ENCODE measurements at regions of chr4 and their contacts with region 1.

Region 1: GRCh38 chr4:121462660-121463261 is 81.9 kb upstream of the QRFPR start:
- DNase-seq: peak; percentile 54
- H3K4me3 ChIP-seq: no peak overlapping the region
- H3K27ac ChIP-seq: no peak overlapping the region
- H3K4me1 ChIP-seq: no peaks in the 10 kb centered on the region
- H3K27me3 ChIP-seq: no peaks in the 10 kb centered on the region
- CTCF ChIP-seq: peak; percentile 77 to 87

Region 2: GRCh38 chr4:121192480-121192879 is 270.3 kb before region 1 on chr4:
- CTCF ChIA-PET with region 1: no interaction called
- dilution Hi-C with region 1: no loop called
- in situ Hi-C with region 1: no loop called
- intact Hi-C with region 1: loop called (anchors 2 kb)
- DNase-seq: peak; percentile 35
- H3K4me3 ChIP-seq: peak overlapping the region in 2 of 3 experiments; percentile 2 to 31
- H3K27ac ChIP-seq: no peak overlapping the region
- H3K4me1 ChIP-seq: peaks cover 5% of the 10 kb centered on the region
- H3K27me3 ChIP-seq: peaks cover 3% of the 10 kb centered on the region
- CTCF ChIP-seq: peak; percentile 74 to 79

Region 3: GRCh38 chr4:121656269-121656641 is 193.5 kb after region 1 on chr4:
- CTCF ChIA-PET with region 1: interaction called, 4 read pairs
- dilution Hi-C with region 1: no loop called
- in situ Hi-C with region 1: loop called (anchors 10 kb)
- intact Hi-C with region 1: loop called (anchors 1 kb)
- DNase-seq: peak; percentile 50
- H3K4me3 ChIP-seq: no peak overlapping the region
- H3K27ac ChIP-seq: no peak overlapping the region
- H3K4me1 ChIP-seq: no peaks in the 10 kb centered on the region
- H3K27me3 ChIP-seq: no peaks in the 10 kb centered on the region
- CTCF ChIP-seq: peak; percentile 51 to 59

Region 4: DNA sequence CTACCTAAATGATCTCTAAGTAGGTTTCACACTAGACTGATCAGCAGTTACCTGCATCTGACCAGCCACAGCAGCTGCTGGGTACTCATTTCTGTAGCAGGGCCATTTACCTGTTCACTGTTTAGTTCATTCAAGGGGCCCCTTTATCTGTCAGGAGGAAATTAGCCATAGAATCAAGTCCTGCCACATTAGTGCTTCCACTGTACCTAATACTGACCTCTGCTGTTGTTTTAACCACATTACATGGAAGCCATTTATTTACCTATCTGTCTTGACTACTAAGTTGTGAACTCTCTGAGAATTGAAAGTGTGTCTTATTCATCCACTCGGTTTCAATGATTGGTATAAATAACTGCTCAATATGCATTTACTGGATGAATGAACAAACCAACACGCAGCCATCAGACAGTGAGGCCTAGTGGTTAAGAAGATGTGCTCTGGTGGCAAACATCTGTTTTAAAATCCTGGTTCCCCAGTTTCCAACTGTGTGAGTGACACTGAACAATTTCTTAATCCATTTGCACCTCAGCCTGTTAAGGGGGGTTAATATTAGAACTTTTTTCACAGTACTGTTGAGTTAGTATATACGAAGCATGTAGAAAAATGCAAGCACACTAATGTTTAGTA is 264.0 kb after region 1 on chr4:
- CTCF ChIA-PET with region 1: no interaction called
- dilution Hi-C with region 1: no loop called
- in situ Hi-C with region 1: loop called in 1 of 2 experiments (anchors 10 kb)
- intact Hi-C with region 1: loop called (anchors 2 kb)
- DNase-seq: peak; percentile 62
- H3K4me3 ChIP-seq: no peak overlapping the region
- H3K27ac ChIP-seq: no peak overlapping the region
- H3K4me1 ChIP-seq: peaks cover 15% of the 10 kb centered on the region
- H3K27me3 ChIP-seq: no peaks in the 10 kb centered on the region
- CTCF ChIP-seq: peak; percentile 71 to 74

Region 5: GRCh38 chr4:121877041-121877777 is 414.4 kb after region 1 on chr4:
- CTCF ChIA-PET with region 1: interaction called, 36 read pairs
- dilution Hi-C with region 1: no loop called
- in situ Hi-C with region 1: no loop called
- intact Hi-C with region 1: no loop called
- DNase-seq: no peak
- H3K4me3 ChIP-seq: no peak overlapping the region
- H3K27ac ChIP-seq: no peak overlapping the region
- H3K4me1 ChIP-seq: no peaks in the 10 kb centered on the region
- H3K27me3 ChIP-seq: peaks cover 2% of the 10 kb centered on the region
- CTCF ChIP-seq: no peak